ENCODE measurements at regions of chr17 and their contacts with region 1.

Region 1: DNA sequence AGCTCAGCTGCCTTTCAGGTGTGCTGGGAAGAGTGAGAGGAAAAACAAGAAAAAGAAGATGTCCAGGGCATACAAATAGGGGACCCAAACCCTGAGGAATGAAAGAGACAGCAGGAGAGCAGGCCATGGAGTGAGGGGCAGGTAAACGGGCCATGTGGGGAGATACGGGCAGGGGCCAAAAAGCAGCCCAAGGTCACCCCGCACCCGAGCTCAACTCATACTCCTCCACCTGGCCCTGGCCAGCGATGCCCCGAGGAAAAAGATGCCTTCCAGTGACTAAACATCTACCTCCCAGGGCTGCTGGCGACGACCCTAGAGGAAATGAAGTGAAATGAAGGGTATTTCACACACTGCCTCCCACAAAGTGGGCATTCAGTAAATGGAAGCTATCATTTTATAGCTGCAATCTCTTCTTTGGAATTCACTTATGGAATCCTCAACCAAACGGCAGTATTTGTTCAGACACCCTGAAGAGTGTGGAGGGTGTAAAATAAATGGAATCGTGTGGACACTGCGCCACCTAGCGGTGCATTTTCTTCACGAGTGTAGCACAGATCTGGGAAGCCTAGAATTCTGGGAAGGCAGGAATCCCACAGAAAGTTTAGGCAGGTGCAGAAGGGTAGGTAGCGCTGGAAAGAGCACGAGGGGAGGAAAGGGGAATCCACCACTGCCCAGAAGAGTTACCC is 14.9 kb downstream of the ELAC2 start:
- DNase-seq: peak; percentile 63
- ATAC-seq: peak; percentile 66
- H3K4me3 ChIP-seq: no peak overlapping the region
- H3K4me3 Mint-ChIP-seq: no peak overlapping the region
- H3K27ac ChIP-seq: no peak overlapping the region
- H3K27ac Mint-ChIP-seq: no peak overlapping the region
- H3K4me1 ChIP-seq: no peaks in the 10 kb centered on the region
- H3K4me1 Mint-ChIP-seq: no peaks in the 10 kb centered on the region
- H3K27me3 ChIP-seq: no peaks in the 10 kb centered on the region
- H3K27me3 Mint-ChIP-seq: no peaks in the 10 kb centered on the region
- CTCF ChIP-seq: peak; percentile 93

Region 2: DNA sequence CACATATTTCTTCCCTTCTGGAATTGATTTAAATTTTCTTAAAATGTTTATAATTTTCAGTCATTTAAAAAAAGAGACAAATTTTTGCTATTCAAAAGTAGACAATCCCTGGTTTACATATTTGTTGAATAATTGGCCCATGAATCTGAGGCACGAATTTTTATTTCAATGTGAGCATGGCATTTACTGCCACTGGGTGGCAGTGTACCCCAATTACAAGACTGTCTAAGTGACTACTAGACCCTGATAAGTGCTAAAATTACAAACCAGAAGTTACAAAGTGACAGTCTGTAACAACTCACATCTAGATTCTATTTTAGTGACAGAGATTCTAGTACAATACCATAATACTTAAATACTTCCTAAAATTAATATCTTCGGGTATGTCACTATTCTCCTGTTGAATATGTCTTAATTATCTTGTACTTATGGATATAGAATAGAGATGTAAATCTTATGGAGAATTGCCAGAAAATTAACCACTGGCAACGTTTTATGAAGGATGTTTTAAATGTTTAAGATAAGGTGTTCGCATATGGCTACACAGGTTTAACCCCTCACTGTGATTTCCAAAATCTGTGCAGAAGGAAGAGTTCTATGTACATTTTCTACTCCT is 746.4 kb before region 1 on chr17:
- CTCF ChIA-PET with region 1: interaction called, 41 read pairs
- POLR2A ChIA-PET with region 1: no interaction called
- intact Hi-C with region 1: no loop called
- DNase-seq: peak; percentile 37
- ATAC-seq: peak; percentile 51
- H3K4me3 ChIP-seq: no peak overlapping the region
- H3K4me3 Mint-ChIP-seq: no peak overlapping the region
- H3K27ac ChIP-seq: no peak overlapping the region
- H3K27ac Mint-ChIP-seq: no peak overlapping the region
- H3K4me1 ChIP-seq: no peaks in the 10 kb centered on the region
- H3K4me1 Mint-ChIP-seq: no peaks in the 10 kb centered on the region
- H3K27me3 ChIP-seq: no peaks in the 10 kb centered on the region
- H3K27me3 Mint-ChIP-seq: peaks cover 3% of the 10 kb centered on the region
- CTCF ChIP-seq: peak; percentile 73

Region 3: GRCh38 chr17:12673788-12674187 is 329.1 kb before region 1 on chr17:
- CTCF ChIA-PET with region 1: no interaction called
- POLR2A ChIA-PET with region 1: no interaction called
- intact Hi-C with region 1: loop called (anchors 5 kb)
- DNase-seq: no peak
- ATAC-seq: no peak
- H3K4me3 ChIP-seq: no peak overlapping the region
- H3K4me3 Mint-ChIP-seq: no peak overlapping the region
- H3K27ac ChIP-seq: no peak overlapping the region
- H3K27ac Mint-ChIP-seq: no peak overlapping the region
- H3K4me1 ChIP-seq: no peaks in the 10 kb centered on the region
- H3K4me1 Mint-ChIP-seq: no peaks in the 10 kb centered on the region
- H3K27me3 ChIP-seq: no peaks in the 10 kb centered on the region
- H3K27me3 Mint-ChIP-seq: peaks cover 11% of the 10 kb centered on the region
- CTCF ChIP-seq: no peak

Region 4: GRCh38 chr17:13017659-13018459 is 14.9 kb after region 1 on chr17 and contains the start of gene ELAC2:
- CTCF ChIA-PET with region 1: interaction called, 19 read pairs
- POLR2A ChIA-PET with region 1: interaction called, 3 read pairs
- intact Hi-C with region 1: no loop called
- DNase-seq: peak; percentile 97
- ATAC-seq: peak; percentile 99
- H3K4me3 ChIP-seq: peak within 1 kb of the TSS; percentile 62 to 98 (median 75)
- H3K4me3 Mint-ChIP-seq: peak within 1 kb of the TSS; percentile 97
- H3K27ac ChIP-seq: peak within 1 kb of the TSS; percentile 69 to 80
- H3K27ac Mint-ChIP-seq: peak within 1 kb of the TSS; percentile 91
- H3K4me1 ChIP-seq: peaks cover 12 to 13% of the 10 kb centered on the region in 2 donors
- H3K4me1 Mint-ChIP-seq: peaks cover 20% of the 10 kb centered on the region
- H3K27me3 ChIP-seq: no peaks in the 10 kb centered on the region
- H3K27me3 Mint-ChIP-seq: no peaks in the 10 kb centered on the region
- CTCF ChIP-seq: peak; percentile 20
- total RNA-seq, gene ELAC2: 79.0 and 79.4 TPM in 2 replicates

Region 5: GRCh38 chr17:13106171-13106570 is 103.3 kb after region 1 on chr17:
- CTCF ChIA-PET with region 1: no interaction called
- POLR2A ChIA-PET with region 1: no interaction called
- intact Hi-C with region 1: no loop called
- DNase-seq: no peak
- ATAC-seq: no peak
- H3K4me3 ChIP-seq: no peak overlapping the region
- H3K4me3 Mint-ChIP-seq: no peak overlapping the region
- H3K27ac ChIP-seq: no peak overlapping the region
- H3K27ac Mint-ChIP-seq: no peak overlapping the region
- H3K4me1 ChIP-seq: no peaks in the 10 kb centered on the region
- H3K4me1 Mint-ChIP-seq: no peaks in the 10 kb centered on the region
- H3K27me3 ChIP-seq: no peaks in the 10 kb centered on the region
- H3K27me3 Mint-ChIP-seq: no peaks in the 10 kb centered on the region
- CTCF ChIP-seq: no peak

Measured in B cell (primary cell).